ENCODE measurements at regions of chr1 and their contacts with region 1.

Region 1: GRCh38 chr1:203692565-203693470 is 66.2 kb downstream of the ATP2B4 start:
- DNase-seq: peak; percentile 90

Region 2: DNA sequence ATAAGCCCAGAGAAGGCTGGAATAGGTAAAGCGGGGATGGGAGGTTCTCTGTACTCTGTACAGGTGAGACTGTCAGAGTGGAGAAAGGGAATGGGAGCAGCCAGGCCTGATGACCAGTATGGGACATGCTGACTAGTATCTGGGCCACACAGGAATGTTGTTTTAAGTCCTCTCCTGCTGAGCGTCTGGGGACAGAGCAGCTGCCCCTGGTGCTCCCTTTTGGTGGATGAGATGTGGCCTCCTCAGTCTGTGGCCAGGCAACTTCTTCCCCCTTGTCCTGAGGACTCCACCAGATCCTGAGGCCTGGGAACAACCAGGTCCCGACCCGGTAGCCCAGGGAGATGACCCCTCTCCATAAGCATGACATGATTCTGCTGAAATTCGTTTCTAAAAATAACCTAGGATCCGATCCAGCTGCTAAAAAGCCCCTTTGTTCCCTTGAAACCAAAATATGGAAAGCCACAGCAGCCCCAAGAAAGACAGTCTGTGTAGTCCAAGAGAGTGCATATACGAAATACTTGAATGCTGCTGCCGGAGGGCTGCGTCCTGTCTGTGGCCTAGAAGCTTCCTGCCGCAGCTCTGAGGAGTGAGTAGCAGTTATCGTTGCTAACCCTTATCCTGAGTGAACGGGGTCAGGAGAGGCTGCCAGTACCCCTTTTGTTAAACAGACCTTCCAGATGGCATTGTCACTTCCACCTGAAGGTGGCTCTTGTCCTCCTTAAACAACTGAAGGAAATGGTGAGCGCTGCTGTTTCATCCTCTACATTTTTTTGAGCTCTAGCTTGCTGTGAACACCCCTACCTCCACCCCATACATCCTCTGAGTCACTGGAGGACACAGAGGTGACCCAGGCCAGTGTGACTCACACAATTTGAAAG is 19.0 kb before region 1 on chr1:
- intact Hi-C with region 1: loop called (anchors 2 kb)
- DNase-seq: no peak

Measured in cardiac septum (tissue), 1 donor.